Thyroid gland (tissue), 4 donors: ENCODE measurements at regions of chr6 and their contacts with region 1.

Region 1: GRCh38 chr6:134640975-134641429 is 308.9 kb downstream of the ALDH8A1 start:
- DNase-seq: peak; percentile 79 to 83
- H3K4me3 ChIP-seq: no peak overlapping the region
- H3K27ac ChIP-seq: no peak overlapping the region
- H3K4me1 ChIP-seq: peaks cover 0 to 21% of the 10 kb centered on the region in 2 donors
- H3K27me3 ChIP-seq: no peaks in the 10 kb centered on the region
- CTCF ChIP-seq: peak in 5 of 6 experiments; percentile 83 to 98 (median 89)
- POLR2A ChIP-seq: no peak

Region 2: DNA sequence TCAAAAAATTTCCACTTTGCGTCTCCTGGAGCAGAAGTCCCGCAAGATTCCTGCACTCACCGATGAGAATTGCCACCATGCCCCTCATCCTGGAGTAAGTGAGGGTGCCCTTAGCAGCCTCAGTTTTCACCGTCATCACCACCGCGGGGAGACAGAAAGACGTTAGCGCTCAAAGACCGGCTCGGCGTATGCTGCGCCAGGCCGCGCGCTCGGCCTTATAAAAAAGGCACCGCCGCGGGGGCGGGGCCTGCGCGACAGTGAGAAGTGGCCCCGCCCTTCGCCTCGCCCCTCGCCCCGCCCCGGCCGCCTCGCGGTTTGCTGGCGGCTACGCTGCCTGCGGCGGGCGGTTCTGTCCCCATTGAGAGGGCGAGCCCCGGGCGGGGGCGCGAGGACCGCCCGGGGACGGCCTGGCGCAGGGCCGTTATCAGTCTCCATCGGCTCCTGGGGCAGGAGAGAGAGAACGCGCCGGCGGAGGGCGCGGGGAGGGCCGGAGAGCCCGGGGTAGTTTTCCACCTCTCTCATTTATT is 466.3 kb before region 1 on chr6:
- intact Hi-C with region 1: loop called (anchors 5 kb)
- DNase-seq: peak; percentile 95
- H3K4me3 ChIP-seq: peak overlapping the region; percentile 86 to 95 (median 95)
- H3K27ac ChIP-seq: peak overlapping the region; percentile 98 to 100 (median 99)
- H3K4me1 ChIP-seq: peaks cover 47 to 57% of the 10 kb centered on the region in 2 donors
- H3K27me3 ChIP-seq: no peaks in the 10 kb centered on the region
- CTCF ChIP-seq: peak in 2 of 6 experiments; percentile 3 to 22
- POLR2A ChIP-seq: peak; percentile 88 to 100

Region 3: DNA sequence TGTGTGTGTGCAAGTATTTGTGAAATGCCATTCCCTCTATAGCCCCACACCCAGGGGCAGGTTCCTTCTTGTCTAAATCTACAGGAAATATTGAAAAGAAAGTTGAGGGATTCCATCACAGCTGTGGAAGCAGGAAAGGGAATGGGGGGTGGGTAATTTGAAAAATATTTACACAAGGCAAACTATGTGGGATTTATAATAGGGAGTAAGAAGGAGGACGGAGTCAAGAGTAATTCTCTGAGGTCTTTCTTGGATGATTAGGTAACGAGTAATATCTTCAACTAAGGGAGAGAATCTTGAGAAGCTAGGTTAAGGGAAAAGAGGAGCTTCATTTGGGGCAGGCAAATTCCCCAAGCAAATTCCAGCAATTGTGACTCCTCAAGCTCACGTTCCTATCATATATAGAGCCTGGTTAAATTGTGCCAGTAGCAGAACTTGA is 209.6 kb before region 1 on chr6:
- intact Hi-C with region 1: no loop called
- DNase-seq: no peak
- H3K4me3 ChIP-seq: no peak overlapping the region
- H3K27ac ChIP-seq: peak overlapping the region in 2 of 3 donors; percentile 24 to 41
- H3K4me1 ChIP-seq: peaks cover 23% of the 10 kb centered on the region in 2 donors
- H3K27me3 ChIP-seq: no peaks in the 10 kb centered on the region
- CTCF ChIP-seq: no peak
- POLR2A ChIP-seq: no peak

Region 4: DNA sequence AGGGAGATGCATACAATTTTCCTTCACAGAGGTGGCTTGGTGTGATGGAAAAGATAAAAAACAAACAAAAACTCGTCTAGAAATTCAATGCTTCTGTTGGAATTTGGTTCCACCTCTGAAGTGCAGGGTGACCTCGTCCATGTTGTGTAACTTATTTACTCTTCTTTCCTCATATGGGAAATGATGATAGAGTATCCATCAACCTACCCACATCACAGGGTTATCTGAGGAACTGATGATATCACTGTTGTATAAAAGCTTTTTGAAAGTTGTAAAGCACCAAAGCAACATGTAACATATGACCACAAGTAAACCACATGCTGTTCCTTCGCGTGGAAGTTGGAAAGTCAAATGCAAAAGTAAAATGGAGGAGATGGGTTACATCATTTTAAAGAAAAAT is 111.1 kb before region 1 on chr6:
- intact Hi-C with region 1: loop called (anchors 10 kb)
- DNase-seq: no peak
- H3K4me3 ChIP-seq: no peak overlapping the region
- H3K27ac ChIP-seq: no peak overlapping the region
- H3K4me1 ChIP-seq: peaks cover 7 to 16% of the 10 kb centered on the region in 2 donors
- H3K27me3 ChIP-seq: no peaks in the 10 kb centered on the region
- CTCF ChIP-seq: no peak
- POLR2A ChIP-seq: no peak

Region 5: DNA sequence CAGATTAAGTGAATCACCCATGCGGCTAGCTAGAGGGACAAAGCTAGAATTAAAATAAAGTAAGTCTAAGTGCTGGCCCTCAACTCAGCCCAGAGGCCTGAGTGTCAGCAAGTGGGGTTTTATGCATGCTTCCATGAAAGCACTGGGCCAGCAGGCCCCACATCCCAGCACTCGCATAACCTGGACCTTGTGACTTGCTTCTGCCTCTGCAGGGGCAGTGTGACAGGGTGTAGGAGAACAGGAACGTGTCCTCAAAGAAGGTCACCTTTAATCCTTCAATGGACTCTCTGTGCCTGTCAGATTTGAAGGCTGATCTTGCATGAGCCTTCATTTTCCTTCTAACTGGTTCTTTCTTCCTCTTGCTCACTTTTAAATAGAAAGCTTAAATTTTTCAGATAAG is 125.5 kb after region 1 on chr6:
- intact Hi-C with region 1: no loop called
- DNase-seq: no peak
- H3K4me3 ChIP-seq: no peak overlapping the region
- H3K27ac ChIP-seq: no peak overlapping the region
- H3K4me1 ChIP-seq: no peaks in the 10 kb centered on the region
- H3K27me3 ChIP-seq: no peaks in the 10 kb centered on the region
- CTCF ChIP-seq: no peak
- POLR2A ChIP-seq: no peak

Region 6: DNA sequence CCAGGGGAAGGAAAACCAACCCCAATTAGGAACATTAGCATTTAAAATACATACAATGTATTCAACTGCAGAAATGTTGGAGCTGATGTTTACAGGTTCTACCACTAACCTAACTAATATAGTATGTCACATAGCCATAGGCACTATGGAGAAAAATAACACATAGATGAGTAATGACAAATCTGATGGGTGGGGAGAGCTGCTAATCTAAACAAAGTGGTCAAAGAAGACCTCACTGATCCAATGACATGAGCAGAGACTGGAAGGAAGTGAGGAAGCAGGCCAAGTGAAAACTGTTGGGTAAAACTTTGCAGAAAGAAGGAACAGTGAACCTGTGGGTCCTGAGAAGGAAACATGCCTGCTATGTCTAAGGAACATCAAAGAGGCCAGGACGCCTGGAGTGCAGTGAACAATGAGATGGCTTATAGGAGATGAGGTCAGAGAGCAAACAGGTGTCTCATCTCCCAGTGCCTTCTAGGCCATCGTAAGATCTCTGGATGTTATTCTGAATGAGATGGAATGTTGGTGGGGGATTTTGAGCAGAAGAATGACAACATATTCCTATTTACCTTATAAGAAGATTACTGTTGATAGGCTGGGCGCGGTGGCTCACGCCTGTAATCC is 173.2 kb after region 1 on chr6:
- intact Hi-C with region 1: loop called (anchors 10 kb)
- DNase-seq: no peak
- H3K4me3 ChIP-seq: no peak overlapping the region
- H3K27ac ChIP-seq: no peak overlapping the region
- H3K4me1 ChIP-seq: peaks cover 24% of the 10 kb centered on the region in 2 donors
- H3K27me3 ChIP-seq: no peaks in the 10 kb centered on the region
- CTCF ChIP-seq: no peak
- POLR2A ChIP-seq: no peak